Activated CD4-positive, alpha-beta T cell treated with anti-CD3 and anti-CD28 coated beads, Interleukin-2, amount 10 ng/mL, durations not matched to agents 7 days and 5 days (primary cell): ENCODE measurements at regions of chr18 and their contacts with region 1.

Region 1: GRCh38 chr18:51185075-51185474 is 12.4 kb downstream of the MEX3C start:
- DNase-seq: no peak
- H3K4me3 Mint-ChIP-seq: no peak overlapping the region
- H3K27ac Mint-ChIP-seq: no peak overlapping the region
- H3K4me1 Mint-ChIP-seq: peaks cover 48% of the 10 kb centered on the region
- H3K27me3 Mint-ChIP-seq: no peaks in the 10 kb centered on the region

Region 2: DNA sequence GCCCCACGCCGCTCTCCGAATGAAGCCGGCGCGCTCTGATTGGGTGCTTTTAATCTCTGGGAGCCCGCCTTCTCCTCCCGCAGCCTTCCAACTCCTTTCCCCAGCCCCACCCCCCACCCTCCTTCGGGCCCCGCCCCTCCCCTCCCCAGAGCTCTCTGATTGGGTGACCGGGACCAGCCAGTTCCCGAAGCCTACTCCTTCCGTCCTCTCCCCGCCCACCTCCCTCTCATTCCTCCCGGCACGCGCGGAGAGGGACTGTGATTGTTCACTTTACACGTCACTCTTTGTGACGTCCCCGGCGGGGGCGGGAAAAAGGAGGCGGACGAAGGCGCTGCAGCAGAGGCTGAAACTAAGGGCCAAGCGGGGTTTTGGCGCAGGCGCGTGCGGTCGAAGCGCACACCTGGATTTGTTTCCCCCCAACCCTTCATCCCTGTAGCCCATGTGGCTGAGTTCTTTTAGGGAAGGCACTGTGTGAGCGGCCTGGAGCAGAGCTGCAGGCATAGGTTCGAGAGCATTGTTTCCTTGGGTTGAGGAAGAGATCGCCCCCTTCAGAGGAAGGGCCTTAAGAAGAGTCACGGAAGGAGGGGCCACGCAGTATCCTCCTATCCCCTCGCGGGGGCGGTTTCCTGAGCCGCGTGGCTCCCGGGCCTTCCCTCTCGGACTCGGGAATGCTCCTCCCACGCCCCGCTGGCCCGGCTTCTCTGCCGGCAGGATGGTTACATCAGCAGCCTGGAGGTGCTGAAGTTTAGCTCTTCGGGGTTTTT is 12.8 kb after region 1 on chr18 and contains the start of gene MEX3C:
- CTCF ChIA-PET with region 1: interaction called, 24 read pairs
- POLR2A ChIA-PET with region 1: interaction called, 5 read pairs
- DNase-seq: peak; percentile 100
- H3K4me3 Mint-ChIP-seq: peak within 1 kb of the TSS; percentile 90
- H3K27ac Mint-ChIP-seq: peak within 1 kb of the TSS; percentile 96
- H3K4me1 Mint-ChIP-seq: peaks cover 22% of the 10 kb centered on the region
- H3K27me3 Mint-ChIP-seq: no peaks in the 10 kb centered on the region
- total RNA-seq, gene MEX3C: 49.6 to 58.2 TPM

Region 3: GRCh38 chr18:51404620-51405019 is 219.5 kb after region 1 on chr18:
- CTCF ChIA-PET with region 1: no interaction called
- POLR2A ChIA-PET with region 1: no interaction called
- DNase-seq: no peak
- H3K4me3 Mint-ChIP-seq: no peak overlapping the region
- H3K27ac Mint-ChIP-seq: no peak overlapping the region
- H3K4me1 Mint-ChIP-seq: no peaks in the 10 kb centered on the region
- H3K27me3 Mint-ChIP-seq: peaks cover 14% of the 10 kb centered on the region